ENCODE measurements at regions of chr19 and their contacts with region 1.

Region 1: GRCh38 chr19:9584073-9584833 is at the start of gene ZNF121:
- DNase-seq: peak; percentile 90
- ATAC-seq: peak; percentile 84
- H3K4me3 ChIP-seq: peak within 1 kb of the TSS; percentile 77 to 100 (median 92)
- H3K4me3 Mint-ChIP-seq: peak within 1 kb of the TSS; percentile 94
- H3K27ac ChIP-seq: peak within 1 kb of the TSS; percentile 90 to 96
- H3K27ac Mint-ChIP-seq: peak within 1 kb of the TSS; percentile 95
- H3K4me1 ChIP-seq: peaks cover 0 to 27% of the 10 kb centered on the region in 2 donors
- H3K4me1 Mint-ChIP-seq: peaks cover 31% of the 10 kb centered on the region
- H3K27me3 ChIP-seq: peaks cover 0 to under 1% (median 0%) of the 10 kb centered on the region in 4 experiments
- H3K27me3 Mint-ChIP-seq: peaks cover 4% of the 10 kb centered on the region
- CTCF ChIP-seq: no peak
- total RNA-seq, gene ZNF121: 48.0 and 53.5 TPM in 2 replicates

Region 2: GRCh38 chr19:9140159-9140874 is 443.9 kb before region 1 on chr19 and contains the start of gene ZNF317:
- CTCF ChIA-PET with region 1: no interaction called
- POLR2A ChIA-PET with region 1: no interaction called
- intact Hi-C with region 1: loop called (anchors 1 kb)
- DNase-seq: peak; percentile 94
- ATAC-seq: peak; percentile 90
- H3K4me3 ChIP-seq: peak within 1 kb of the TSS; percentile 70 to 99 (median 97)
- H3K4me3 Mint-ChIP-seq: peak within 1 kb of the TSS; percentile 98
- H3K27ac ChIP-seq: peak within 1 kb of the TSS; percentile 86 to 90
- H3K27ac Mint-ChIP-seq: peak within 1 kb of the TSS; percentile 97
- H3K4me1 ChIP-seq: peaks cover 13 to 15% of the 10 kb centered on the region in 2 donors
- H3K4me1 Mint-ChIP-seq: peaks cover 33% of the 10 kb centered on the region
- H3K27me3 ChIP-seq: no peaks in the 10 kb centered on the region
- H3K27me3 Mint-ChIP-seq: peaks cover 2% of the 10 kb centered on the region
- CTCF ChIP-seq: no peak
- total RNA-seq, gene ZNF317: 60.6 and 65.2 TPM in 2 replicates

Region 3: GRCh38 chr19:9309139-9309973 is 274.9 kb before region 1 on chr19 and contains the start of gene ZNF699:
- CTCF ChIA-PET with region 1: interaction called, 3 read pairs
- POLR2A ChIA-PET with region 1: no interaction called
- intact Hi-C with region 1: loop called (anchors 1 kb)
- DNase-seq: peak; percentile 99
- ATAC-seq: peak; percentile 87
- H3K4me3 ChIP-seq: peak within 1 kb of the TSS; percentile 77 to 100 (median 87)
- H3K4me3 Mint-ChIP-seq: peak within 1 kb of the TSS; percentile 87
- H3K27ac ChIP-seq: peak within 1 kb of the TSS; percentile 73 to 92
- H3K27ac Mint-ChIP-seq: peak within 1 kb of the TSS; percentile 92
- H3K4me1 ChIP-seq: peaks cover 9 to 12% of the 10 kb centered on the region in 2 donors
- H3K4me1 Mint-ChIP-seq: peaks cover 24% of the 10 kb centered on the region
- H3K27me3 ChIP-seq: no peaks in the 10 kb centered on the region
- H3K27me3 Mint-ChIP-seq: no peaks in the 10 kb centered on the region
- CTCF ChIP-seq: no peak
- total RNA-seq, gene ZNF699: 17.3 and 22.0 TPM in 2 replicates

Region 4: GRCh38 chr19:9538183-9539058 is 45.8 kb before region 1 on chr19 and contains the start of gene ZNF426:
- CTCF ChIA-PET with region 1: no interaction called
- POLR2A ChIA-PET with region 1: no interaction called
- intact Hi-C with region 1: loop called (anchors 1 kb)
- DNase-seq: peak; percentile 90
- ATAC-seq: peak; percentile 87
- H3K4me3 ChIP-seq: peak within 1 kb of the TSS; percentile 63 to 97 (median 77)
- H3K4me3 Mint-ChIP-seq: peak within 1 kb of the TSS; percentile 100
- H3K27ac ChIP-seq: peak within 1 kb of the TSS; percentile 80 to 88
- H3K27ac Mint-ChIP-seq: peak within 1 kb of the TSS; percentile 99
- H3K4me1 ChIP-seq: peaks cover 7 to 11% of the 10 kb centered on the region in 2 donors
- H3K4me1 Mint-ChIP-seq: peaks cover 25% of the 10 kb centered on the region
- H3K27me3 ChIP-seq: no peaks in the 10 kb centered on the region
- H3K27me3 Mint-ChIP-seq: no peaks in the 10 kb centered on the region
- CTCF ChIP-seq: no peak
- total RNA-seq, gene ZNF426: 22.1 and 22.3 TPM in 2 replicates

Region 5: GRCh38 chr19:9674663-9675357 is 90.6 kb after region 1 on chr19 and contains the start of gene ZNF562:
- CTCF ChIA-PET with region 1: no interaction called
- POLR2A ChIA-PET with region 1: no interaction called
- intact Hi-C with region 1: loop called (anchors 1 kb)
- DNase-seq: peak; percentile 90
- ATAC-seq: peak; percentile 88
- H3K4me3 ChIP-seq: peak within 1 kb of the TSS; percentile 74 to 95 (median 81)
- H3K4me3 Mint-ChIP-seq: peak within 1 kb of the TSS; percentile 100
- H3K27ac ChIP-seq: peak within 1 kb of the TSS; percentile 80 to 89
- H3K27ac Mint-ChIP-seq: peak within 1 kb of the TSS; percentile 99
- H3K4me1 ChIP-seq: peaks cover 3% of the 10 kb centered on the region in 2 donors
- H3K4me1 Mint-ChIP-seq: peaks cover 18% of the 10 kb centered on the region
- H3K27me3 ChIP-seq: no peaks in the 10 kb centered on the region
- H3K27me3 Mint-ChIP-seq: no peaks in the 10 kb centered on the region
- CTCF ChIP-seq: no peak
- total RNA-seq, gene ZNF562: 27.9 and 31.8 TPM in 2 replicates

Measured in B cell (primary cell).